ENCODE measurements at regions of chr10 and their contacts with region 1.

Region 1: GRCh38 chr10:110279407-110279986 is 25.2 kb downstream of the SMNDC1 start:
- DNase-seq: peak; percentile 69
- H3K4me3 Mint-ChIP-seq: no peak overlapping the region
- H3K27ac Mint-ChIP-seq: no peak overlapping the region
- H3K4me1 Mint-ChIP-seq: peaks cover 18% of the 10 kb centered on the region
- H3K27me3 Mint-ChIP-seq: no peaks in the 10 kb centered on the region

Region 2: DNA sequence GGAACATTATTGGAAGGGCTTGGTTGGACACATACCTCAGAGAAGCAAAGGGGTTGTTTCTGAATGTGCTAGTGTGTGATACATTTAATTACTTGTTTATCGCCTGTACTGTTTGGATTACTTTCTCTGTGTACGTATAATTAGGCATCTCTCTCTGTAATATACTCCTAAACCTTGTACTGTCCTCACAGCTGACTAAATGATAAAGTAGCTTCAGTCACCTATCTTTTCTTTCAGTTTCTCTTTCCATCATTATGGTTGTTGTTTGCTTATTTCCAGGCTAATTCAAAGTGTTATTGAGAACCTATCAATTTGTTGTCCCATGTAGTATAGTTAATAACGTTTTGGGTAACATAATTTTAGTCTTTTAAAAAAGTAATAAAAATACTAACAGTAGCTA is 38.1 kb before region 1 on chr10:
- CTCF ChIA-PET with region 1: interaction called, 6 read pairs
- intact Hi-C with region 1: loop called (anchors 5 kb)
- DNase-seq: no peak
- H3K4me3 Mint-ChIP-seq: no peak overlapping the region
- H3K27ac Mint-ChIP-seq: no peak overlapping the region
- H3K4me1 Mint-ChIP-seq: peaks cover 33% of the 10 kb centered on the region
- H3K27me3 Mint-ChIP-seq: peaks cover 3% of the 10 kb centered on the region

Region 3: GRCh38 chr10:111686796-111687400 is 1407.4 kb after region 1 on chr10:
- CTCF ChIA-PET with region 1: no interaction called
- intact Hi-C with region 1: no loop called
- DNase-seq: no peak
- H3K4me3 Mint-ChIP-seq: no peak overlapping the region
- H3K27ac Mint-ChIP-seq: no peak overlapping the region
- H3K4me1 Mint-ChIP-seq: no peaks in the 10 kb centered on the region
- H3K27me3 Mint-ChIP-seq: peaks cover 3% of the 10 kb centered on the region